ENCODE measurements at regions of chr2 and their contacts with region 1.

Region 1: DNA sequence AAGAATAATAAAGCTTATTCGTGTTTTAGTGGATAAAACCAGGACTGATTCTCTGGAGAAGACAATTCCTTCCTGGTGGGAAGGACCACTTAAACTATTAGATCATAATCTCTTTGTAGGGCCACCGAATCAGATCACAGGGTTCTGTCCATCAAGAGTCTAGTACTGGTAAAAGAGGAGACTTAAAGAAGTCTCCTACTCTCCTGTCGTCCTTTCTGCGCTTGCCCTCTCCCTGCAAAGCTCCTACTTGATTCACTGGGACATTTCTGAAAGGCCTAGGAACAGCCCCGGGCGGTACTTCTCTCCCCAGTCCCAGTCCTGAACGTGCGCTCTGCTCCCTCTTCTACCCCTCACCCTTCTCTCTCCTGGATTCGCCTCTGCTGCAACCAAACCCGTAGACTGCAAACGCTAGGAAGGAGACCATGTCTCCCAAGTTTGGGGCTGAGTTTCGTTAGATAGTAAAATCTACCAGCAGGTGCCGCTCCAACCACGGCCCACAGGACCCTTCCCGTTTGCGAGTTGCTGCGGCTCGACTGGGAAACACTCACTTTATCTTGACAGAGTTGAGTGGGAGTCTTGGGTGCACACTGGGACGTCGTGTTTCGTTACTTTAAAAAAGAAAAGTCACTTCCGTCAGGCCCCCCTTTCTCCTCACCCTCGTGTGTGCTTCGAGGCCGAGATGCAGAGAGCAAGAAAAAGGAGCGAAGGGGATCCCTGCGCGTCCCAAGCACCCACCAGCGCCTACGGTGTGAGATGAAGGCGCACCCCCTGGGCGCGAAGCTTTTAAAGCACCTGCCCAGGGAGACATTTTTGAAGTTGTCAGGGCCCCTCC is 923 bp downstream of the FIGLA start:
- DNase-seq: peak; percentile 86

Region 2: DNA sequence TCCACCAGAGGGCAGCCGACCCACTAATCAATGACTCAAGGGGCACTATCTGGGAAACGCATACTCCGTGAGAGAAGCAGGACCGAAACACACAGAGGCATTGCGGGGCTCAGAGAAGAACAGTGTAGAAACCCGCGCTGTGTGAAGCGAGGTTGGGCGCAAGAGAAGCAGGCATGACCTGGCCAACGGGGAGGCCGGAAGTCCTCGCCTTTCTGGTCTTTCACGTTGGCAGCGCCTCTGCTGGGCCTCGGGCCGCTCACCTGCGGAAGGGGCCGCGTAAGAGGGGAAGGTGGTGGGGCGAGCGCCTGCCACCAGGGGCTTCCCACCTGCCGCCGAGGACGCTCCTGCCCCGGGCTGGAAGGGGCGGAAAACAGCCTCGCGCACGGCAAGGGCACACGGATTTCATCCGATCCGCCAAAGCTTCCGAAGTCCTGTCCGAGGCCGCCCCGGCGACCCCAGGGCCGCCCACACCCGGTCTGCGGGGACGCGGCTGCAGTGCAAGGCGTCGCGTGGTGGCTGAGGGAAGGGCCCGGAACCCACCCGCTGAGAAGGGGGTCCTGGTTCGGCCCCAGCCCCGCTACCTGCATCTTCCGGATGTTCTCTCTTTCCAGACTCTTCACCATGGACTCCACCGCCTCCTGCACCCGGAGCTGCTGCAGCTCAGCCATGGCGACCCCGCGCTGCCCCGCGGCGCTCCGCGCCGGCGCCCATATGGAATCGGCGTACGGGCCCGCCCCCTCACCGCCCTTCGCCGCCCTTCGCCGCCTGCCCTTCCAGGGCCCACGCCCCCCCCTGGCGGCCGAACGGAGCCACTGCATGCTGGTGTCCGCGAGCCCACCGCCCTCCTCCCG is 488.0 kb before region 1 on chr2 and contains the start of gene FAM136A:
- in situ Hi-C with region 1: loop called (anchors 25 kb)
- DNase-seq: peak; percentile 86
- total RNA-seq, gene FAM136A: 60.0 and 64.0 TPM in 2 replicates

Region 3: GRCh38 chr2:70716131-70716743 is 73.3 kb before region 1 on chr2:
- in situ Hi-C with region 1: no loop called
- DNase-seq: no peak